ENCODE measurements at regions of chr19 and their contacts with region 1.

Region 1: GRCh38 chr19:6125571-6125989 is 9.9 kb upstream of the ACSBG2 start:
- DNase-seq: peak; percentile 69 to 75 (median 72)
- H3K4me3 ChIP-seq: no peak overlapping the region
- H3K4me3 Mint-ChIP-seq: no peak overlapping the region
- H3K27ac ChIP-seq: no peak overlapping the region
- H3K27ac Mint-ChIP-seq: peak overlapping the region in 2 of 7 donors; percentile 48 to 81
- H3K4me1 ChIP-seq: no peaks in the 10 kb centered on the region
- H3K4me1 Mint-ChIP-seq: no peaks in the 10 kb centered on the region
- H3K27me3 ChIP-seq: no peaks in the 10 kb centered on the region
- H3K27me3 Mint-ChIP-seq: peaks cover 0 to 1% of the 10 kb centered on the region in 2 donors

Region 2: GRCh38 chr19:5987077-5987818 is 138.3 kb before region 1 on chr19:
- CTCF ChIA-PET with region 1: interaction called, 4 read pairs
- POLR2A ChIA-PET with region 1: no interaction called
- intact Hi-C with region 1: loop called (anchors 1 kb)
- DNase-seq: peak; percentile 57 to 71 (median 64)
- H3K4me3 ChIP-seq: peak overlapping the region in 1 of 2 donors; percentile 55
- H3K4me3 Mint-ChIP-seq: peak overlapping the region; percentile 70 to 87 (median 78)
- H3K27ac ChIP-seq: no peak overlapping the region
- H3K27ac Mint-ChIP-seq: peak overlapping the region in 5 of 7 donors; percentile 22 to 72 (median 36)
- H3K4me1 ChIP-seq: peaks cover 28% of the 10 kb centered on the region
- H3K4me1 Mint-ChIP-seq: peaks cover 9 to 24% (median 19%) of the 10 kb centered on the region in 4 donors
- H3K27me3 ChIP-seq: no peaks in the 10 kb centered on the region
- H3K27me3 Mint-ChIP-seq: no peaks in the 10 kb centered on the region

Region 3: GRCh38 chr19:6039541-6040225 is 85.9 kb before region 1 on chr19:
- CTCF ChIA-PET with region 1: interaction called, 134 read pairs
- POLR2A ChIA-PET with region 1: no interaction called
- intact Hi-C with region 1: no loop called
- DNase-seq: no peak
- H3K4me3 ChIP-seq: no peak overlapping the region
- H3K4me3 Mint-ChIP-seq: no peak overlapping the region
- H3K27ac ChIP-seq: no peak overlapping the region
- H3K27ac Mint-ChIP-seq: peak overlapping the region in 1 of 7 donors; percentile 0
- H3K4me1 ChIP-seq: no peaks in the 10 kb centered on the region
- H3K4me1 Mint-ChIP-seq: peaks cover 0 to 4% (median 2%) of the 10 kb centered on the region in 4 donors
- H3K27me3 ChIP-seq: no peaks in the 10 kb centered on the region
- H3K27me3 Mint-ChIP-seq: no peaks in the 10 kb centered on the region

Region 4: DNA sequence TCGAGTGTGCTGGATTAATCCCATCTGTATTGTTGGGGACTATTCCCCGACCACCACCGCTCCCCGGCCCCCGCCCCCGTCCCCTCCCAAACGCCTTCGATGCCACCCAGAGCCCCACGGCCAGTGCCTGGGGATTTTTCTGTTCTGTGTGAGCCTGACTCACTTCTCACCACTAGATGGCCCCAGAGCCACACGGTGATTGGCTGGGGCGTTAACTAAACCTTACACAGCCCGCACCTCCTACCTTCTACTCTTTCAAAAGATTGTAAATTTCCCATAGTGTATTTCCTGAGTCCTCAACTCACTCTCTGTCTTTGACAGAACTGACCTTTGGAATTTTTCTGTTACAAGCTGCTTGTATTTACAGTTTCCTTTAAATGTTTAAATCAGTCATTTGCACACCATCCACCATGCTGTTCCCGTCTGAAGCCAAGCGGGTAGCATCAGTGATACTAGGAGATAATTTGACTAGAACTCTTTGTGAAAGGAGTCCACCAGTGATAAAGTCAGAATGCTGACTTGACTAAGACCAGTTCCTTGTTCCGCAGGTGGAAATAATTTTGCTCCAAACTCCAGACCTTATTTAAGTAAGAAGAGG is 76.7 kb before region 1 on chr19:
- CTCF ChIA-PET with region 1: interaction called, 134 read pairs
- POLR2A ChIA-PET with region 1: interaction called, 7 read pairs
- intact Hi-C with region 1: loop called (anchors 1 kb)
- DNase-seq: peak; percentile 73 to 77 (median 75)
- H3K4me3 ChIP-seq: no peak overlapping the region
- H3K4me3 Mint-ChIP-seq: peak overlapping the region in 1 of 8 donors; percentile 26
- H3K27ac ChIP-seq: no peak overlapping the region
- H3K27ac Mint-ChIP-seq: peak overlapping the region in 1 of 7 donors; percentile 15
- H3K4me1 ChIP-seq: no peaks in the 10 kb centered on the region
- H3K4me1 Mint-ChIP-seq: peaks cover 1 to 6% (median 4%) of the 10 kb centered on the region in 4 donors
- H3K27me3 ChIP-seq: no peaks in the 10 kb centered on the region
- H3K27me3 Mint-ChIP-seq: peaks cover 0 to 2% of the 10 kb centered on the region in 2 donors

Region 5: GRCh38 chr19:6100284-6100915 is 25.2 kb before region 1 on chr19:
- CTCF ChIA-PET with region 1: interaction called, 11 read pairs
- POLR2A ChIA-PET with region 1: no interaction called
- intact Hi-C with region 1: no loop called
- DNase-seq: peak in 4 of 5 donors; percentile 23 to 50 (median 28)
- H3K4me3 ChIP-seq: no peak overlapping the region
- H3K4me3 Mint-ChIP-seq: peak overlapping the region in 7 of 8 donors; percentile 47 to 87 (median 80)
- H3K27ac ChIP-seq: no peak overlapping the region
- H3K27ac Mint-ChIP-seq: peak overlapping the region in 6 of 7 donors; percentile 32 to 95 (median 82)
- H3K4me1 ChIP-seq: peaks cover 3% of the 10 kb centered on the region
- H3K4me1 Mint-ChIP-seq: peaks cover 6 to 16% (median 10%) of the 10 kb centered on the region in 4 donors
- H3K27me3 ChIP-seq: no peaks in the 10 kb centered on the region
- H3K27me3 Mint-ChIP-seq: no peaks in the 10 kb centered on the region

Region 6: GRCh38 chr19:6110360-6110977 is 15.1 kb before region 1 on chr19 and contains the start of gene RFX2:
- CTCF ChIA-PET with region 1: interaction called, 28 read pairs
- POLR2A ChIA-PET with region 1: no interaction called
- intact Hi-C with region 1: no loop called
- DNase-seq: peak; percentile 99 to 100 (median 99)
- H3K4me3 ChIP-seq: peak within 1 kb of the TSS; percentile 52 to 55
- H3K4me3 Mint-ChIP-seq: peak within 1 kb of the TSS; percentile 90 to 97 (median 94)
- H3K27ac ChIP-seq: peak within 1 kb of the TSS; percentile 43
- H3K27ac Mint-ChIP-seq: peak within 1 kb of the TSS; percentile 93 to 97 (median 95)
- H3K4me1 ChIP-seq: peaks cover 27% of the 10 kb centered on the region
- H3K4me1 Mint-ChIP-seq: peaks cover 11 to 26% (median 23%) of the 10 kb centered on the region in 4 donors
- H3K27me3 ChIP-seq: peaks cover 4% of the 10 kb centered on the region
- H3K27me3 Mint-ChIP-seq: peaks cover 2 to 7% of the 10 kb centered on the region in 2 donors
- total RNA-seq, gene RFX2: 5.6 to 6.7 TPM

Measured in CD4-positive, alpha-beta memory T cell (primary cell).